Dendritic cell treated with granulocyte-macrophage colony-stimulating factor and Interleukin-4, amounts not matched to agents 40 ng/mL and 50 ng/mL, for 4 days (primary cell): ENCODE measurements at regions of chr13 and their contacts with region 1.

Region 1: DNA sequence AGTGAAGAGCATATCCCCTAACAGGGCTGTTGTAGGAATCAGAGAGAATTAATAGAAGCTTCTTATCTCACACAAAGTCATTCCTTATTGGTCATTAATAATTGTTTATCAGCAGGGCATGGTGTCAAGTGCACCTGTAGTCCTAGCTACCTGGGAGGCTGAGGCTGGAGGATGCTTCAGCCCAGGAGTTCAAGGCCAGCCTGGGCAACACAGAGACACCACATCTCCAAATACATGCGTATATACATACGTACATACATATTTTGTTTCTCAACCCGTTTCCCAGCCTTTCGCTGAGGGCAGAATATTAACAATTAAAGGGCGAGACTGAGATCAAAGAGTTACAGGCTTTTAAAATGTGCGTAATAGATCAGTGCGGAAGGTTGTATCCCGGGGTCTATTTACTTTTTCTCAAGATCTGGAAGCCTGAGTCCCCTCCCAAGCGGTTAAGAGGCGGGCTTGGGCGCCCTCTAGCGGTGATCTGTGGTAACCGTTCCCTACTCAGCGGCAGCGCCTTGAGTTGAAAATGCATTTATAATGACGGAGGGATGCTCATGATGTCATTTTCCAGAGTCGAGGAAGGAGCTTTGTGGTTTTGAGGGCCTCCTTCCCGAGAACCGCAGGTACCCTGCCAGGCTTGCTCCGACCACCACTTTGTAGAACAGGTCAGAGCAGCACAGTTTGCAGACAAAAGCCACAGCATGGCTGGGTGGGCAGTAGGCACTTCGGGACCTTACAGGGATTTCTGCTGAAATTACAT is 169.6 kb upstream of the GPR12 start:
- H3K4me3 Mint-ChIP-seq: no peak overlapping the region
- H3K27ac Mint-ChIP-seq: no peak overlapping the region
- H3K4me1 Mint-ChIP-seq: no peaks in the 10 kb centered on the region
- H3K27me3 Mint-ChIP-seq: peaks cover under 1% of the 10 kb centered on the region

Region 2: DNA sequence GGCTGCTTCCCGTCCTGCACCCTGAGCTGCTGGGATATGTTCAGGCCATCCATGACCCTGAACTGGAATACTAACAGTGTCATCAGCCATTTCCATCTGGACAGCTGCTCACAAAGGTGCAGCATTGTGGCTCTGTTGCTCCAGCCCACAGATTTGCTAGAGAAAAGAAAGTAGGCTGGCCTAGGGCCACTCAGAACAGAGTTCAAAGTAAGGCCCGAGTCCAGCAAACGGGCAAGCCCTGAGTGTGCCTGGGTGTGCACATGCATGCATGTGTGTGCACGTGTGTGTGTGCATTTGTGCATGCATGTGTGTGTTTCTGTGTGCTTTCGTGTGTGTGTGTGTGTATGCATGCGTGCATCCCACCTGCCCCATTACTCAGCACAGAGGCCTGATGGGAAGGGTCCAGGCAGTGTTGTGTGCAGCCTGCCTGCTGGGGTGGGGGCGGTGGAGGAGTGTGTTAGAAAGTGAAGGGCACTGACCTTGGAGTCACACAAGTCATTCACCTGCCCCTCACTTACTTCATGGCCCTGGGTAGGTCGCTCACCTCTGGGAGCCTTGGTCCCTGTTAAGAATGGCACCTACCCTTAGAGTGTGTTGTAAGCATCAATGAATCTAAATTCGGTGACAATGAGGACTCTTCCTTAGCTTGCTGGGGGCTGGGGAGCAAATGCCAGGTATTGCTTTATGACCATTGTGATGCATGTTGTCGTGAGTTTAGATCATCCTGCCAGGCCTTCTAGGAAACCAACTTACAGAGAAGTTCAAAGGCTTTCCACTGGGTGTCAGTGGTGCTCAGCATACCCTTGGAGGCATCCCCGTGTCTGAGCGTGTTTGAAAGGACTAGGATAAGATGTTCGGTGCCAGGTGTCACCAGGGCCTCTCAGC is 222.8 kb before region 1 on chr13:
- intact Hi-C with region 1: loop called (anchors 5 kb)
- H3K4me3 Mint-ChIP-seq: no peak overlapping the region
- H3K27ac Mint-ChIP-seq: no peak overlapping the region
- H3K4me1 Mint-ChIP-seq: no peaks in the 10 kb centered on the region
- H3K27me3 Mint-ChIP-seq: peaks cover 4% of the 10 kb centered on the region